ENCODE measurements at regions of chr22 and their contacts with region 1.

Region 1: GRCh38 chr22:25447686-25448434 is 116.6 kb upstream of the GRK3 start:
- DNase-seq: peak; percentile 76 to 94 (median 88)
- H3K4me3 ChIP-seq: peak overlapping the region; percentile 54 to 98 (median 85)
- H3K27ac ChIP-seq: peak overlapping the region in 46 of 59 donors; percentile 10 to 88 (median 66)
- H3K27me3 ChIP-seq: no peaks in the 10 kb centered on the region
- CTCF ChIP-seq: peak; percentile 87 to 100 (median 97)

Region 2: DNA sequence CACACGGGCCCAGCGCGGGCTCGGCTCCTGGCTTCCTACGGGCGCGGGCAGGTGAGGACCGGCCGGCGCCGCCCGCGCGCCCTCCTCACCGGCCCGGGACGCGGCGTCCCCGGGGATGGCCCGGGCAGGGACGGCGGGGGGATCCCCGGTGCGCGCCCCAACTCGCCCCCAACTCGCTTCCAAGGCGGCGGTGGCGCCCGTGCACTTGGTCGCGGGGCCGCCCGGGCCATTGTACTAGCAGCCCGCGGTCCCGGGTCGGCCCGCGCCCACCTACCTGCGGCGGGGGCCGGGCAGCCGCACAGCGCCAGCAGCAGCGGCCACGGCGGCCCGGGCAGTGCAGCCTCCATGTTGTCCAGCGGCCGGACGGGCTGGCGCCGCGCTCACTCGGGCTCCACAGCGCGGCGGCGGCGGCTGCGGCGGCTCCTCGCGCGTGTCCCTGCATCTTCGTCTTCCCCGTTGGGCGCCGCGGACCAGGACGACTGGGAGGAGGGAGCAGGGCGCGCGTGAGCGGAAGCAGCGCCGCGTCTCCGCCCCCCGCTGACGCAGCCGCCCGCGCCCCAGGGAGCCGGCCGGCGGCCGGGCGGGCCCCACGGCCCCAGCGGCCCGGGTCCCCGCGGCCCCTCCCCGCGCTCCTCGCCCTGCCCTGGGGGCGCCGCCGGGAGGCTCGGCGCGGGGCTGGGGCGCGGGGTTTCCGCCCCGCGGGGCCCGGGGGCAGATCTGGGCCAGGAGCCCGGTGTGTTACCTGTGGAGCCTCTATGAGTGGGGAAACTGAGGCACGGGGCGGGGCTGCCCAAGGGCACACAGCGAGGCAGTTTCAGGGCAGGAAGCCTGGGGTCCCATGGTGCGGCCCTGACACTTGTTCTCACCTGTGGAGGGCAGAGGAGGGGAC is 42.7 kb before region 1 on chr22:
- intact Hi-C with region 1: loop called in 1 of 2 experiments (anchors 2 kb)
- DNase-seq: peak; percentile 41 to 83 (median 66)
- H3K4me3 ChIP-seq: peak overlapping the region; percentile 51 to 91 (median 72)
- H3K27ac ChIP-seq: peak overlapping the region in 37 of 59 donors; percentile 20 to 89 (median 71)
- H3K27me3 ChIP-seq: no peaks in the 10 kb centered on the region
- CTCF ChIP-seq: peak in 2 of 56 donors; percentile 2 to 9